Activated T-helper 1 cell treated with anti-CD3 and anti-CD28 coated beads, Interleukin-12 subunit alpha, Interleukin-12 subunit beta, Interleukin-2, Interleukin-4 antibody, amounts not matched to agents 30 ng/mL and 10 ng/mL and 1 ng/mL, durations not matched to agents 14 hours and 24 hours and 36 hours (primary cell): ENCODE measurements at regions of chr14 and their contacts with region 1.

Region 1: DNA sequence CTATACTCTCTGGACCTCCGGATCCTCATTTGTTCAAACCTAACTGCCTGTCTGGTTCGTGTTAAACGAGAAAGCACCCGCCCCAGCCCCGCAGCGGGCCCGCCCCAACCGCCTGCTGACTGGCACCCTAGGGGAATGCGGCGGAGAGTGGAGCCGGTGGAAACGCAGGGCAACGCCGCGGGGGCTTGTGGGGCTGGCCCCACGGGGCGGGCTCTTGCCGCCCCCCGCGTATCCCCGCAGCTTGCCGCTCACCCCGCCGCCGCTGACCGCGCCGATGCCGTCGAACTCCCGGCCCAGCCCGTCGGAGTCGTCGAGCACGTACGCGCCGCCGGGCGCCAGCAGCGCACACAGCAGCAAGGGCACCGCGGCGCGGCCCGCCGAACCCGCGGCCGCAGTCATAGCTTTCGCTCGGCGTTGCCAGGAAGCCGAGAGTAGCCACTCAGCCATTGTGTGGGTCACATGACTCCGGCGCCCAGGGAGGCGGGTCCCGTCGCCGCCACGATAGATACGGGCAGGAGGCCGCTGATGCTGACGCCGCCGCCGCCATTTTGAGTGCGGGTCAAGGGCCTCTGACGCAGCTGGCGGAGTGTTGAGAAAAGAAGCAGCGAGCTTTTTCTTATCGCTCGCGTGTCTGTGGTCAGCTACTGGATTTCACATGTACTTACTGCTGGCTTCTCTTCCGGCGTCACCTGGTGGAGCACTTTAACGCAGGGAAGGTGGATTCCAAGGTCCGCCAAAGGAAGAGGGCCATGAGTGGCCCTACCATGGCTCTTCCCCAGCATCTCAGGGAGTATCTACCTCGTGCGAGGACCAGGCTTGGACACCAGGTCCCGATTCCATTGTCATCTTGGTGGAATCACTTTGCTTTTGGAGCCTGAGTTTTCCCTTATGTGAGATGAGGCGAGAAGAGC is at the start of gene GALC:
- DNase-seq: peak; percentile 93
- H3K4me3 Mint-ChIP-seq: peak within 1 kb of the TSS; percentile 92
- H3K27ac Mint-ChIP-seq: peak within 1 kb of the TSS; percentile 98
- H3K4me1 Mint-ChIP-seq: peaks cover 55% of the 10 kb centered on the region
- H3K27me3 Mint-ChIP-seq: no peaks in the 10 kb centered on the region
- total RNA-seq, gene GALC: 8.6 and 8.7 TPM in 2 replicates

Region 2: DNA sequence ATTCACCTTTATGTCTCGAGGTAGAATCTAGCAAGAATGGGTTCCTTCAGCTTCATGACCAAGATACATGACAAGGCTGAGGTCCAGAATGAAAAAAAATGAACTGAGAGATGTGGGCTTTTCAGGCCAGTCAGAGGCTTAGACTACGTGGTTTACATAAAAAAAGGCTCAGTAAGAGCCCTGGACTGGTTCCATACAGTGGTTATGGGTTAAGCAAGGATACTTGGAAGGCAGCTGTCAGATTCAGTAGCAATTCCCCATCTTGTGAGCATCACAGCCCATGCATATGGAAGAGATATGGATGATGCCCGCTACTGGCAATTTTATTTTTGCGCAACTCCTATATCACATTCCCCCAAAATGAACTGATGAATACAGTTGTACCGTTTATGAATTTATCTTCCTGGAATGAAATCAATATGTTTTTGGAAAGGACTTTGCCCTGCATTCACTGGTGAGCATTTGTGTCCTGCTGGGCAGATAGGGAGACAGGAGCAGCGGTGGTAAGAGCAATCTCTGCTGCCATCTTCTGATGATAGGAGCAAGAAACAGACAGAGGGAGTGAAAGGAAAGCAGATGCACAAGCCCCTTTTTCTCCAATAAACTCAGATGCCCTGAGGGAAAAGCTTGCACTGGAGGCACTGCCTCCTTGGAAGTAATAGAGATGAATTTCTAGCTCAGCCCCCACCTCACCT is 280.4 kb before region 1 on chr14:
- intact Hi-C with region 1: no loop called
- DNase-seq: no peak
- H3K4me3 Mint-ChIP-seq: no peak overlapping the region
- H3K27ac Mint-ChIP-seq: no peak overlapping the region
- H3K4me1 Mint-ChIP-seq: no peaks in the 10 kb centered on the region
- H3K27me3 Mint-ChIP-seq: no peaks in the 10 kb centered on the region

Region 3: GRCh38 chr14:88026890-88027289 is 33.9 kb after region 1 on chr14:
- intact Hi-C with region 1: loop called (anchors 5 kb)
- DNase-seq: no peak
- H3K4me3 Mint-ChIP-seq: peak overlapping the region; percentile 53
- H3K27ac Mint-ChIP-seq: peak overlapping the region; percentile 85
- H3K4me1 Mint-ChIP-seq: peaks cover 82% of the 10 kb centered on the region
- H3K27me3 Mint-ChIP-seq: no peaks in the 10 kb centered on the region

Region 4: GRCh38 chr14:88044851-88045339 is 51.9 kb after region 1 on chr14:
- intact Hi-C with region 1: loop called (anchors 2 kb)
- DNase-seq: no peak
- H3K4me3 Mint-ChIP-seq: no peak overlapping the region
- H3K27ac Mint-ChIP-seq: peak overlapping the region; percentile 41
- H3K4me1 Mint-ChIP-seq: peaks cover 15% of the 10 kb centered on the region
- H3K27me3 Mint-ChIP-seq: no peaks in the 10 kb centered on the region

Region 5: DNA sequence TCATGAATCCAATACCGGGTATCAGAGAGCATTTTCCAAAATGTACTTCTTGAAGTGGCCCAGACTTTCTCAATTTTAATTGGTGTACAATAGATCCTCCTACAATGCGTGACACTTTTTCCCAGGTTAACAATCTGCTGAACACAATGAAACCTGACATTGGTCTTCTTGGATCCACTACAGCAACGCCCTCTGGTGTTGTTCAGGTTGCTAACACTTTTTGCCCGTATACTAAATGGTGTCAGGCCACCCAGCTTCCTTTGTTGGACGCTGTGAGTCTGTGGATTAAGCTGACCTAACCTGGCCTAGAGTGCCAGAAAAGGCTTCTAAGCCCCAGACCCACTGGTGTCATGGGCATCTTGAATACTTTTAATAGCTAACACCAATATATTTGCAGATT is 240.9 kb after region 1 on chr14:
- intact Hi-C with region 1: no loop called
- DNase-seq: no peak
- H3K4me3 Mint-ChIP-seq: no peak overlapping the region
- H3K27ac Mint-ChIP-seq: no peak overlapping the region
- H3K4me1 Mint-ChIP-seq: no peaks in the 10 kb centered on the region
- H3K27me3 Mint-ChIP-seq: peaks cover 5% of the 10 kb centered on the region

Region 6: DNA sequence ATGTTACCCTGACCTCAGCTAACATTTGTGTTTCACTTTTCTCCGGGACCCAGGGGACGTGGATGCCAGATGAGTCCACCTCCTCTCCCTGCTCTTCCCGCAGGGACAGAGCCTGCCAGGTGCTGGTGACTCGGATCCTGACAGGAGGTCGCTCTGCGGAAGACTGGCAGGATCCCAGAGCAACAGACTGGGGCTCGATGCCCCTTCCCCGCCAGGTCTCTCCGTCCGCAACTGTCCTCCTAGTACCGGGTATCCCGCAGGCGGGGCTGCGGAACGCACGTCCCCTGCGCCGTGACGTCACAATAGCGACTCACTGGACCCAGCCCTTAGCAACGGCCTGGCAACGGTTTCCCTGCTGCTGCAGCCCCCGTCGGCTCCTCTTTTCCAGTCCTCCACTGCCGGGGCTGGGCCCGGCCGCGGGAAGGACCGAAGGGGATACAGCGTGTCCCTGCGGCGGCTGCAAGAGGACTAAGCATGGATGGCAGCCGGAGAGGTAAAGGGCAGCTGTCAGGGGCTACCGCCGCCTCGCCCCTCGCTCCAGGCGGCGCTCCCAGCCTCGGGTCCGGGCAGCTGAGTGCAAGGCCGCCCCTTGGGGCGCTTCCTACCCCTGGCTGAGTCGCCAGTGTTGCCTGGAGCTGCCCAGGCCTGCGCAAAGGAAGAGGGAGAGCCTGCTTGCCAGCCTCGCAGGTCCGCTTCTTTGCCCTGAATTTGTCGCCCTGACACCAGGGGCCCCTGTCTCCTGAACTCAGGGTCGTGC is 392.6 kb after region 1 on chr14 and contains the start of gene SPATA7:
- intact Hi-C with region 1: loop called (anchors 5 kb)
- DNase-seq: peak; percentile 80
- H3K4me3 Mint-ChIP-seq: peak within 1 kb of the TSS; percentile 96
- H3K27ac Mint-ChIP-seq: peak within 1 kb of the TSS; percentile 61
- H3K4me1 Mint-ChIP-seq: peaks cover 15% of the 10 kb centered on the region
- H3K27me3 Mint-ChIP-seq: peaks cover 7% of the 10 kb centered on the region
- total RNA-seq, gene SPATA7: 2.4 and 2.5 TPM in 2 replicates